CD4-positive, alpha-beta memory T cell (primary cell): ENCODE measurements at regions of chr4 and their contacts with region 1.

Region 1: DNA sequence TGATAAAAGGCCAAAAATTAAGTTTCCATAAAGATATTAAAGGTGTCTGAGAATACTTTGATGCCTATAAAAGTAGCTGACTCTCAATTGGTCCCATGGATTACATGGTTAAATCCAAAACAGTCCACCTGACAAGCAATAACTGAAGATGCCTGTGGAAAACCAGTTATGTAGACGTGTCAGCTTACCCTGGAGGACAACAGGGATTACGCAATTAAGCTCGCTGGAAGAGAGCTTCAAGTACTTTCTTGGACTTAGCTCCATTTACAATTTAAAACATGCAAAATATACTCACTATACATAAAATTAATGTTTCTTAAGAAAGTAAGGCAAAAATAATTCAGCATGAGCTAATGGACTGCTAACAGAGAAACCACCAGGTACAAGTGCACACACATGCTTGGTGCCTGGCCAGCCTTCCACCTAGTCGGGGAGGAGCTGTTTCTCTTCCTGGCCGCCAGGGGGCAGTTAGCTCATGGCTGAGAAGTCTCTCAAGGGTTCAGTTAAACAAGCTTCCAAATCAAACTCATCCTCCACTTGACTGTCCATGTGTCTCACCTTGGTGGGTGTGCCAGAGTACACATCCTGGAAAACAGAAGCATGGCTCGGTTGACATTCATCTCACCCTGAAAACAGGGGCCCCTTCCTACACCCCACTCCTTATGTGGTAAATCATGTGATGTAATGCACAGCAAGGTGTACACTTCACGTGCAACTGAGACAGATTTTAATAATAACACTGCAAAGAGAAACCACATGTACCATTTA is 9.2 kb upstream of the FAM53A start:
- DNase-seq: peak; percentile 77 to 81 (median 81)
- H3K4me3 ChIP-seq: no peak overlapping the region
- H3K4me3 Mint-ChIP-seq: no peak overlapping the region
- H3K27ac ChIP-seq: no peak overlapping the region
- H3K27ac Mint-ChIP-seq: peak overlapping the region in 6 of 7 donors; percentile 26 to 90 (median 62)
- H3K4me1 ChIP-seq: peaks cover 4% of the 10 kb centered on the region
- H3K4me1 Mint-ChIP-seq: peaks cover 3 to 5% (median 4%) of the 10 kb centered on the region in 4 donors
- H3K27me3 ChIP-seq: no peaks in the 10 kb centered on the region
- H3K27me3 Mint-ChIP-seq: no peaks in the 10 kb centered on the region

Region 2: GRCh38 chr4:1706358-1706757 is 13.0 kb after region 1 on chr4:
- CTCF ChIA-PET with region 1: interaction called, 115 read pairs
- POLR2A ChIA-PET with region 1: interaction called, 35 read pairs
- intact Hi-C with region 1: no loop called
- DNase-seq: no peak
- H3K4me3 ChIP-seq: no peak overlapping the region
- H3K4me3 Mint-ChIP-seq: peak overlapping the region in 1 of 8 donors; percentile 55
- H3K27ac ChIP-seq: no peak overlapping the region
- H3K27ac Mint-ChIP-seq: peak overlapping the region in 1 of 7 donors; percentile 61
- H3K4me1 ChIP-seq: peaks cover 30% of the 10 kb centered on the region
- H3K4me1 Mint-ChIP-seq: peaks cover 28 to 80% (median 50%) of the 10 kb centered on the region in 4 donors
- H3K27me3 ChIP-seq: no peaks in the 10 kb centered on the region
- H3K27me3 Mint-ChIP-seq: no peaks in the 10 kb centered on the region

Region 3: GRCh38 chr4:1726146-1726934 is 33.0 kb after region 1 on chr4:
- CTCF ChIA-PET with region 1: interaction called, 591 read pairs
- POLR2A ChIA-PET with region 1: interaction called, 128 read pairs
- intact Hi-C with region 1: loop called (anchors 1 kb)
- DNase-seq: peak; percentile 81 to 88 (median 85)
- H3K4me3 ChIP-seq: no peak overlapping the region
- H3K4me3 Mint-ChIP-seq: peak overlapping the region in 7 of 8 donors; percentile 36 to 76 (median 59)
- H3K27ac ChIP-seq: no peak overlapping the region
- H3K27ac Mint-ChIP-seq: peak overlapping the region; percentile 54 to 89 (median 82)
- H3K4me1 ChIP-seq: peaks cover 79% of the 10 kb centered on the region
- H3K4me1 Mint-ChIP-seq: peaks cover 38 to 87% (median 56%) of the 10 kb centered on the region in 4 donors
- H3K27me3 ChIP-seq: no peaks in the 10 kb centered on the region
- H3K27me3 Mint-ChIP-seq: no peaks in the 10 kb centered on the region

Region 4: GRCh38 chr4:1736812-1737211 is 43.5 kb after region 1 on chr4:
- CTCF ChIA-PET with region 1: interaction called, 591 read pairs
- POLR2A ChIA-PET with region 1: interaction called, 3 read pairs
- intact Hi-C with region 1: no loop called
- DNase-seq: no peak
- H3K4me3 ChIP-seq: no peak overlapping the region
- H3K4me3 Mint-ChIP-seq: no peak overlapping the region
- H3K27ac ChIP-seq: no peak overlapping the region
- H3K27ac Mint-ChIP-seq: no peak overlapping the region
- H3K4me1 ChIP-seq: no peaks in the 10 kb centered on the region
- H3K4me1 Mint-ChIP-seq: no peaks in the 10 kb centered on the region
- H3K27me3 ChIP-seq: no peaks in the 10 kb centered on the region
- H3K27me3 Mint-ChIP-seq: no peaks in the 10 kb centered on the region

Region 5: DNA sequence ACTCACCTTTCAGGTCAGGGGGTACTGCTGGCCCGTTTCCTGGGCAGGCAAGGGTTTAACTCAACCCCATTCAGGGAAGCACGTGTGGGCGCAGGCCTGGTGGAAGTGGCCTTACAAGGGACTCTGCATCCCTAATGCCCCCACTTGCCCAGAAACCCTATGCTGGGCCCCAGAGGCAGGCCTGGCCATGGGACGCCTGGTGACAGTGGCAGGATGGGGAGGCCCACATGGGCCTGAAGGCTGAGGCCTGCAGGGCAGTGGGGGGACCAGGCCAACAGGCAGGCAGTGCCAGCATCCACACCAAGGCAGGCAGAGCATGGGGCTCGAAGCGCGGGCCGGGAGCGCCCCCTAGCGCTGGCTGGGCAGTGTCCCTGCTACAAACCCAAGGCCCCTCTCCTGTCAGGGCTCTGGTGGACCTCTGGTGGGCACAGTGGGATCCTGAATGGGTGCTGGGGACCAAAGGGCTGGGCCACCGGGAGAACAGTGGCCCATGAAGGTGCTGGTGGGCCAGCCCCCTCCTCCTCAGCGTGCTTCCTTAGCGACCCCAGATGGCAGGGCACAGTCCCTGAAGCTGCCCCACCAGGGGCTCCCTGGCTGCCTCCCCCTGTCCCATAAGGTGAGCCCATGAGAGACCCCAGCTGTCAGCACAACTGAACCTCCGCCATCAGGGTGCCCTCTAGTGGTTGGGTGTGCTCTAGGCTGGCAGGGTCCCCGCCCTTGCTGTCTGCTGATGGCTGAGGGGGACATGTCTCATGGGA is 116.6 kb after region 1 on chr4:
- CTCF ChIA-PET with region 1: interaction called, 29 read pairs
- POLR2A ChIA-PET with region 1: no interaction called
- intact Hi-C with region 1: no loop called
- DNase-seq: peak; percentile 57 to 65 (median 60)
- H3K4me3 ChIP-seq: no peak overlapping the region
- H3K4me3 Mint-ChIP-seq: no peak overlapping the region
- H3K27ac ChIP-seq: no peak overlapping the region
- H3K27ac Mint-ChIP-seq: no peak overlapping the region
- H3K4me1 ChIP-seq: no peaks in the 10 kb centered on the region
- H3K4me1 Mint-ChIP-seq: peaks cover 0 to 1% (median 0%) of the 10 kb centered on the region in 4 donors
- H3K27me3 ChIP-seq: no peaks in the 10 kb centered on the region
- H3K27me3 Mint-ChIP-seq: no peaks in the 10 kb centered on the region